H1 (cell line): ENCODE measurements at regions of chr10 and their contacts with region 1.

Region 1: GRCh38 chr10:11881477-11882417 is 58.6 kb downstream of the PROSER2 start:
- DNase-seq: peak in 1 of 2 experiments; percentile 65
- H3K4me3 ChIP-seq: no peak overlapping the region
- H3K27ac ChIP-seq: no peak overlapping the region
- H3K4me1 ChIP-seq: peaks cover 0 to 6% (median 0%) of the 10 kb centered on the region in 4 experiments; a peak in 1 of 7 replicates
- H3K27me3 ChIP-seq: no peaks in the 10 kb centered on the region
- CTCF ChIP-seq: peak; percentile 60 to 79 (median 76)
- EP300 ChIP-seq: no peak
- POLR2A ChIP-seq: no peak
- RAD21 ChIP-seq: peak; percentile 65 to 77

Region 2: DNA sequence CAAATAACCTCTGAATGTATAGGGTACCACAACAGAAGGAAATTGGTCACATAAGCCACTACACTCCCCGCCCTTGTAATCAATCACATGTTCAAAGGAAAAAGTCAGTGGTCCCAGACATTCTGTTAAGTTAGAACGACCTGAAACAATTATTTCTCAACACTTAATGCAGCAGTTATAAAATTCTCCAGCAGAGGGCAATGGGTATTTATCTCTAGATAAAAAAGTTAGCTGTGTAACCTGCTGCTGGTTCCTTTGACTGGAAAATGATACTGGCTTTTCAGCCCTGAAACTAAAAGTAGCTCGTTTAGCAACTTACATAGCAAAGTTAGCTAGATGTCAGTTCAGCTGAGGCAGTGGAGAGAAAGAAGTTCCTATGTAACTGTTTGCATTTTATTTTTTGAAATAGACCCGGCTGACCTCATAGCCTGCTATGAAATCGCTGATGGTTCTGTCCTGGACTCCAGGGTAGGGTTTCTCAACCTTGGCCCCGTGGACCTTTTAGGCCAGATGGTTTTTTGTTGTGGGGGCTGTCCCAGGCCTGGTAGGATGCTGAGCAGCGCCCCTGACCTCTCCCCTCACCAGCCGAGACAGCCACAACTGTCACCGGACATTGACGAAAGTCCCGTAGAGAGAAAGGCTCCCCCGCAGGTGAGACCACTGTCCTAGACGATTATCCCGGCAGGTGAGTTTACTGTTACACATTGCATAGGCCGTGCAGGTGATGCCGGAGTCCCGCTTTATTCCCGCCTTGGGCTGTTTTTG is 98.8 kb before region 1 on chr10:
- CTCF ChIA-PET with region 1: interaction called, 18 read pairs
- POLR2A ChIA-PET with region 1: interaction called, 3 read pairs
- DNase-seq: peak in 1 of 2 experiments; percentile 48
- H3K4me3 ChIP-seq: no peak overlapping the region
- H3K27ac ChIP-seq: no peak overlapping the region
- H3K4me1 ChIP-seq: no peaks in the 10 kb centered on the region
- H3K27me3 ChIP-seq: no peaks in the 10 kb centered on the region
- CTCF ChIP-seq: peak in 2 of 3 experiments; percentile 41 to 54; a peak in 2 of 4 replicates
- EP300 ChIP-seq: no peak
- POLR2A ChIP-seq: no peak
- RAD21 ChIP-seq: peak; percentile 60 to 62

Region 3: DNA sequence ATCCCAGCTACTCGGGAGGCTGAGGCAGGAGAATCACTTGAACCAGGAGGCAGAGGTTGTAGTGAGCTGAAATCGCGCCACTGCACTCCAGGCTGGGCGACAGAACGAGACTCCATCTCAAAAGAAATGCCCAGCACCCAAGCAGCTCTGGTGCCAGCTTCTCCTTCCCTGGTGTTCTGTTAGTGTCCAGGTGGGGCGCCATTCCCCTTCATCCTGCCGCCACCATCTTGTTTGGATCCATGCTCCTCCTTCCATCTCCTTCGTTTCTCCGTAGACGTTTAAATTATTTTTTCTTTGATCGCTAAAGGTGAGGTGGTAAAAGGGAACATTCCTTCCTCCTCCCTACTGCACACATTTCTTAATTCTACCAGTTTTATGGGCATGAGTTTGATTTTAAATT is 28.3 kb before region 1 on chr10:
- CTCF ChIA-PET with region 1: interaction called, 10 read pairs
- POLR2A ChIA-PET with region 1: interaction called, 3 read pairs
- DNase-seq: no peak
- H3K4me3 ChIP-seq: no peak overlapping the region
- H3K27ac ChIP-seq: no peak overlapping the region
- H3K4me1 ChIP-seq: no peaks in the 10 kb centered on the region
- H3K27me3 ChIP-seq: no peaks in the 10 kb centered on the region
- CTCF ChIP-seq: peak; percentile 32 to 78 (median 73)
- EP300 ChIP-seq: no peak
- POLR2A ChIP-seq: no peak
- RAD21 ChIP-seq: peak; percentile 51 to 53

Region 4: GRCh38 chr10:11898372-11899066 is 16.8 kb after region 1 on chr10:
- CTCF ChIA-PET with region 1: interaction called, 34 read pairs
- POLR2A ChIA-PET with region 1: interaction called, 4 read pairs
- DNase-seq: no peak
- H3K4me3 ChIP-seq: no peak overlapping the region
- H3K27ac ChIP-seq: no peak overlapping the region
- H3K4me1 ChIP-seq: peaks cover 0 to 4% (median 1%) of the 10 kb centered on the region in 4 experiments; a peak in 2 of 7 replicates
- H3K27me3 ChIP-seq: no peaks in the 10 kb centered on the region
- CTCF ChIP-seq: no peak
- EP300 ChIP-seq: no peak
- POLR2A ChIP-seq: no peak
- RAD21 ChIP-seq: no peak

Region 5: DNA sequence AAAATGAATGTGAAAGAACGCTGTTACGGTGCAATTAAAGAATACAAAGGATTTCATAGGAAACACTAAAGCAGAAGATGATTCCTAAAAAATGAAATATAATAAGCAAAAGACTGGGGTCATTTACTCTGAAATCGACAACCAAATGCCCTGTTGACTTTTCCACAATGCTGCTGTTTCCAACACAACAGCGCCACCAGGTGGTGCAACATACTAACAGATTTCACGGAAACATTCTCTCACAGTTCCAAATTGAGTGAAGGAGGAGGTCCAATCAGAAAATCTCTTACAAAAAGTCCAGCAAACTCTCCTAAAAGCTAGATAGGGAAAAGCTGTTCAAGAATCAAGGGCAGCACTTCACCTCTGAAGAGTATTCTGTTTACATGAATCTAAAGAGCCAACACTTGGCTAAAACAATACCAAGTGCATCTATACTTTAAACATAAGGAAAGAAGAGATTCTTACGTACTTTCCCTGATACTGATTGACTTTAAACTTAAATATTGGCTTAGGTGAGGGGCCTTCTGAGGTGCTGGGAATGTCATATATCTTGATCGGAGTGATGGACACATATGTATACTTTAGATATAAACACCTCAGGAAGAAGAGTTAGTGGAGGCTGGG is 105.0 kb after region 1 on chr10:
- CTCF ChIA-PET with region 1: interaction called, 21 read pairs
- POLR2A ChIA-PET with region 1: no interaction called
- DNase-seq: peak; percentile 27 to 84
- H3K4me3 ChIP-seq: no peak overlapping the region
- H3K27ac ChIP-seq: no peak overlapping the region
- H3K4me1 ChIP-seq: no peaks in the 10 kb centered on the region
- H3K27me3 ChIP-seq: no peaks in the 10 kb centered on the region
- CTCF ChIP-seq: peak; percentile 37 to 90 (median 82)
- EP300 ChIP-seq: no peak
- POLR2A ChIP-seq: no peak
- RAD21 ChIP-seq: peak; percentile 96

Region 6: GRCh38 chr10:12048547-12048946 is 166.8 kb after region 1 on chr10:
- CTCF ChIA-PET with region 1: no interaction called
- POLR2A ChIA-PET with region 1: no interaction called
- DNase-seq: no peak
- H3K4me3 ChIP-seq: no peak overlapping the region
- H3K27ac ChIP-seq: no peak overlapping the region
- H3K4me1 ChIP-seq: no peaks in the 10 kb centered on the region; a peak in 1 of 7 replicates
- H3K27me3 ChIP-seq: no peaks in the 10 kb centered on the region
- CTCF ChIP-seq: no peak
- EP300 ChIP-seq: no peak
- POLR2A ChIP-seq: no peak
- RAD21 ChIP-seq: no peak